ENCODE measurements at regions of chr1 and their contacts with region 1.

Region 1: DNA sequence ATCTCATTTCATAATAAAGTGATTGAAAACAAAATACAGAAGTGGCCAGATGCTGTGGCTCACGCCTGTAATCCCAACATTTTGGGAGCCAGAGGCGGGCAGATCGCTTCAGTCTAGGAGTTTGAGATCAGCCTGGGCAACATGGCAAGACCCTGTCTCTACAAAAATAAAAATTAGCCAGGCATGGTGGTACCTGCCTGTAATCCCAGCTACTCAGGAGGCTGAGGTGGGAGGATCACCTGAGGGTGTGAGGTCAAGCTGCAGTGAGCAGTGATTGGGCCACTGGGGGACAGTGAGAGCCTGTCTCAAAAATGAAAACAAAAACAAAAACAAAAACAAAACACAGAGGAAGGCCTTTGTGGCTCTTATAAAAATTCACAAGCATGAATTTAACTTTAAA is 38.6 kb downstream of the TRIM33 start:
- DNase-seq: no peak
- ATAC-seq: no peak
- H3K4me3 ChIP-seq: no peak overlapping the region; a peak in 1 of 4 replicates
- H3K27ac ChIP-seq: peak overlapping the region; percentile 95
- H3K4me1 ChIP-seq: peaks cover 35 to 79% of the 10 kb centered on the region in 2 experiments
- H3K27me3 ChIP-seq: no peaks in the 10 kb centered on the region
- CTCF ChIP-seq: no peak
- POLR2A ChIP-seq: no peak
- RAD21 ChIP-seq: no peak

Region 2: DNA sequence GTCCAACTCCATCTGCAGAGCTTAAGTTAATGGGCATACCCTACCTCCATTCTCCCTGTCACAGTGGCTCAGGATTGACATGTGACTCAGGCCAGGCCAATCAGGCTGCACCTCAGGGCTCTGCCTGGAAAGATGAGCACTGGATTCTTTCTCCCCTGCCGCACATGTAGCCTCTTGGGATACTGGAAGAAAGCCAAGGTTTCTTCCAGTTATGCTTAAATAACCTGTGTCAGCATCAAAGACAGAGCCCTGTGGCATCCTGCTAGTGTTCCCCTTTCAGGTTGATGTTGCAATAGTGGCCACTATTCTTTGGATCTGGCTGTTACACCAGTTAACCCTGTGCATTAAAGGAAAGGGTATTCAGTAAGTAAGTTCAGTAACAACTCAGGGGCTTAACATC is 263.7 kb before region 1 on chr1:
- CTCF ChIA-PET with region 1: no interaction called
- POLR2A ChIA-PET with region 1: no interaction called
- RAD21 ChIA-PET with region 1: no interaction called
- intact Hi-C with region 1: no loop called
- DNase-seq: no peak
- ATAC-seq: no peak
- H3K4me3 ChIP-seq: no peak overlapping the region
- H3K27ac ChIP-seq: no peak overlapping the region
- H3K4me1 ChIP-seq: no peaks in the 10 kb centered on the region
- H3K27me3 ChIP-seq: peaks cover 84% of the 10 kb centered on the region
- CTCF ChIP-seq: no peak
- POLR2A ChIP-seq: no peak
- RAD21 ChIP-seq: no peak

Region 3: DNA sequence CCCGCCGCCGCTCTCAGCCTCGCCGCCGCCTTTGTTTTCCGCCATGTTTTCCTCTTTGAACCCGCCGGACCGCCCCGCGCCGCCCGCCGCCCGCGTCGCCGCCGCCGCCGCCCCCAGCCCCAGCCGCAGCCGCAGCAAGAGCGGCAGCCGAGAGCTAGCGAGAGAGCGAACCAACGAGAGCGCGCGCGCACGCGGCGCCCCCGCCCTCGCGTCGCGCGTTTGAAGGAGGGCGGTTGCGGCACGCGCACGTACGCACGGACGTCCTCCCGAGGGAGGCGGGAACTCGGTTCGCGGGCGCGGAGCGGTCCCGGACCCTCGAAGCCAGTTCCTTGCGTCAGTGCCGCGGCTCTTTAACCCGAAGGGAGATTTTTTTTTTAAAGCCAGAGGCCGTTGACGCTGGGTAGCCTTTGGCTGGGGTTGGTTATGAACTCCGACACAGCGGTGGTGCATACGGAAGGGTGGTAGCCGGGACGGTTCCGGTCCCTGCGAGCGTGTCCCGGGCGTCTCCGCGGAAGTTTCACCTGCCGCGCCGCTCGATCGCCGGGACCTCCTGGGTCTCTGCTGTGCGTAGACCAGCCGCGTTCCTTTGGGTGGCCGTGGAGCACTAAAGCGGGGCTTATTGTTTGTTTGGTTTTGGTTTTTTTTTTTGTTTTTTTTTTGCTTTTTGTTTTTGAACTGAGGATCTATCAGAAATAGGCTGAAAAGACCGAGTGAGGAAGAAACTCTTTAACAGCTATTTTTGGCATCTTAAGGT is 38.8 kb after region 1 on chr1 and contains the start of gene TRIM33:
- CTCF ChIA-PET with region 1: no interaction called
- POLR2A ChIA-PET with region 1: interaction called, 3 read pairs
- RAD21 ChIA-PET with region 1: no interaction called
- intact Hi-C with region 1: loop called (anchors 5 kb)
- DNase-seq: peak; percentile 86
- ATAC-seq: peak; percentile 86
- H3K4me3 ChIP-seq: peak within 1 kb of the TSS; percentile 91
- H3K27ac ChIP-seq: peak within 1 kb of the TSS; percentile 90
- H3K4me1 ChIP-seq: peaks cover 9 to 31% of the 10 kb centered on the region in 2 experiments; a peak in 3 of 4 replicates
- H3K27me3 ChIP-seq: no peaks in the 10 kb centered on the region
- CTCF ChIP-seq: no peak
- POLR2A ChIP-seq: peak; percentile 90
- RAD21 ChIP-seq: no peak
- total RNA-seq, gene TRIM33: 41.2 TPM

Measured in HCT116 (cell line).